Adrenal gland (tissue), 19 donors: ENCODE measurements at regions of chr14 and their contacts with region 1.

Region 1: GRCh38 chr14:24431569-24432258 is 2.0 kb downstream of the KHNYN start:
- DNase-seq: peak; percentile 92 to 97 (median 95)
- H3K4me3 ChIP-seq: peak overlapping the region in 1 of 4 donors; percentile 74
- H3K27ac ChIP-seq: peak overlapping the region in 4 of 5 donors; percentile 88 to 100 (median 96)
- H3K4me1 ChIP-seq: peaks cover 28 to 37% of the 10 kb centered on the region in 2 donors
- H3K27me3 ChIP-seq: no peaks in the 10 kb centered on the region
- CTCF ChIP-seq: peak; percentile 89 to 99 (median 94)
- POLR2A ChIP-seq: peak in 1 of 2 donors; percentile 54

Region 2: GRCh38 chr14:24332268-24332993 is 99.3 kb before region 1 on chr14:
- intact Hi-C with region 1: loop called (anchors 2 to 5 kb)
- DNase-seq: peak; percentile 68 to 90 (median 79)
- H3K4me3 ChIP-seq: peak overlapping the region in 1 of 4 donors; percentile 31
- H3K27ac ChIP-seq: no peak overlapping the region
- H3K4me1 ChIP-seq: peaks cover 0 to 24% of the 10 kb centered on the region in 2 donors
- H3K27me3 ChIP-seq: peaks cover 11% of the 10 kb centered on the region
- CTCF ChIP-seq: peak; percentile 52 to 84 (median 73)
- POLR2A ChIP-seq: no peak

Region 3: DNA sequence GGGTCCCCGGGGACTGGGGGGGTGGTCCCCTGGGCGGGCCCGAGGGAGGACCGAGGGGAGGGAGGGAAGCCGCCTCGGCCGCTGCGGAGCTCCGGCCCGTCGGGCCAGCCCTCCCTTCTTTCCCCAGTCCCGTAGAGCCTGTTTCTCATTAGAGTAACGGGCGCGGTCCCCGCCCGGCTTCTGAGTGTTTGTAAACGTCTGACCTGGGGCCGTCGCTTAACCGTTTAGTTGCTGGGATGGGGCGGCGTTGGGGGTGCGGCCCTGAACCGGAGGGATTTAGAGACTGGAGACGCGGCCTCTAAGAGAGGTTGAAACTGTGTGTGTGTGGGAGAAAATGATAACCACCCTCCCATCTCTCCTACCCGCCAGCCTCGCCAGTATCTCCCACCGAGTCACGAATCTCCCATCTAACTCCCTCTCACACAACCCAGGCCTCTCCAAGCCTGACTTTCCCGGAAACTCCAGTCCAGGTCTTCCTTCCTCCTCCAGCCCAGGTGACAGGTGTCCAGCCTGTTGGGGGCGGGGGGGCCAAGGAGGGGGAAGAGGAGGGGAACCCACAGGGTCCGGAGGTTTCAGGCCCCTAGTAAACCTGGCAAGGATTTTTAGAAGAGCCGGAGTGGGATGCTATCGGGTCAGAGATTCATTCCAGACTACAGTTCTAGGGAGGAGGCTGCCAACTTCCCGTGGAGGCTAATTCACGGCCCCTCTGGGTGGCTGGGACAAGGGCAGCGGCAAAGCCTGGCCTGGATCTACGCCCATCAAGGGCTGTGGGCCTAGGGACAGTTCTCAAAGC is 64.8 kb before region 1 on chr14:
- intact Hi-C with region 1: loop called (anchors 5 kb)
- DNase-seq: peak; percentile 89 to 92 (median 91)
- H3K4me3 ChIP-seq: peak overlapping the region in 2 of 4 donors; percentile 56 to 83
- H3K27ac ChIP-seq: peak overlapping the region; percentile 84 to 97 (median 88)
- H3K4me1 ChIP-seq: peaks cover 11 to 27% of the 10 kb centered on the region in 2 donors
- H3K27me3 ChIP-seq: no peaks in the 10 kb centered on the region
- CTCF ChIP-seq: peak in 1 of 6 experiments; percentile 3
- POLR2A ChIP-seq: peak in 1 of 2 donors; percentile 73

Region 4: GRCh38 chr14:24392325-24393091 is 39.2 kb before region 1 on chr14:
- intact Hi-C with region 1: no loop called
- DNase-seq: no peak
- H3K4me3 ChIP-seq: no peak overlapping the region
- H3K27ac ChIP-seq: no peak overlapping the region
- H3K4me1 ChIP-seq: peaks cover 0 to 8% of the 10 kb centered on the region in 2 donors
- H3K27me3 ChIP-seq: peaks cover 6% of the 10 kb centered on the region
- CTCF ChIP-seq: no peak
- POLR2A ChIP-seq: no peak